ENCODE measurements at regions of chr21 and their contacts with region 1.

Region 1: DNA sequence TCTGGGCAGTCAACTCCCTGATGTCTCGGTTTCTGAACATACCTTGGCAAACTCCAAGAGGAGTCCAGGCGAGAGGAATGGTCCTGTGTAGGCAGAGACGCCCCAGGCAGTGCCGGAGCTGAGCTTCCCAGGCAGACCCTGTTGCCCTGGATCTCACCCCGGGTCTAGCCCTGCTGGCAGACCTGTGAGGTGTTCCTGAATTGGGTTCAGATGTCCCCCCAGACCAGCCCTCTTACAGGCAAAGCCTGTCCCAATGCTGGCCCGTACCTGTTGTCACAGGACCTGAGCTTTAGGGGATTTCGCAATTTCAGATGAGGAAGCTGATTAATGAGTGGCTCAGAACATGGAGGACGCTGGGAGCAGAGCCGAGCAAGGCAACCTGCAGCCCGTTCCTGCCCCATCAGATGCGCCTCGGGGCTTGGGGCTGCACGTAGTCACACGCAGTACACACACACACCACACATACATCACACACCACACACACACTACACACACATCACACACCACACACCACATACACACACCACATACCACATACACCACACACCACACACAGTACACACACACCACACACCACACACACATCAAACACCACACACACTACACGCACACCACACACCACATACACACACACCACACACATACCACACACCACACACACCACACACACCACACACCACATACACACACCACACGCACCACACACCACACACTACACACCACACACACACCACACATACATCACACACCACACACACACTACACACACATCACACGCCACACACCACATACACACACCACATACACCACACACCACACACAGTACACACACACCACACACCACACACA is 38.4 kb upstream of the PDE9A start:
- DNase-seq: peak; percentile 84
- H3K4me3 Mint-ChIP-seq: no peak overlapping the region
- H3K27ac Mint-ChIP-seq: no peak overlapping the region
- H3K4me1 Mint-ChIP-seq: peaks cover 6% of the 10 kb centered on the region
- H3K27me3 Mint-ChIP-seq: no peaks in the 10 kb centered on the region

Region 2: DNA sequence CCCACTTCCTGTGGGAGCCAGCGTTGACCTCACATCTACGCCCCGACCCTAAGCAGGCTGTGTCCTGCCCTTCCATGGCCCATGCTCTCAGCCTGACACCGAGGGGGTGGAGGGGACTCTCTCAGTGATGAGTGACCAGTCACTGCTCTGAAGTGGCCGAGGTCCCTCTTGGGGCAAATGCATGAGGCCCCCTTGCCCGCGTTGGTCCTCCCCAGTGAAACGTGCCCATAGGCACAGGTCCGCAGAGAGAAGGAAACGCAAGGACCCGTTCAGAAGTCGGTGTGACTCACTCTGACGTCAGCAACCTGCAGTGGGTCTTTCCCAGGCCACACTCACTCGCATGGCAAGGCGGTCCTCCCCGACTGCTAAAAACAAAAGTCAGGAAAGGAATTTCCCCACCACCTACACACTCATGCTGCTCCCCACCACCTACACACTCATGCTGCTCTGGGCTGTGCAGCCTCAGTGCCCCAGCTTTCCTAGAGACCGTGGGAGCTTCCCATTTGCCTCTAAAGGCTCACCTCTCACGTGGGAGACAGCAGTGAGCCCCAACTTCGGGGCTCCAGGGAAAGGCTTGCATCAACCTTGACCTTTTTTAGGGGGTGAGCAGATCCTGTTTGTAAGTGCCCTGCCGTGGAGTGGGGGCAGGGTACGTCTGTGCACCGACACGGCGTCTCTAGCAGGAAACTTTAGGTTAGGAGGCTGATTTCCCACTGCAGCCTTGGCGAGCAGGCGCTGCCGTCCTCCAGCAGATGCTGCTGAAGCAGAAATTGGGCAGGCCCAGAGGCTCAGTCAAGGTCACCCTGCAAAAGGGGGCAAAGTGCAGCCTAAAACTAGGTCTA is 199.9 kb before region 1 on chr21:
- CTCF ChIA-PET with region 1: no interaction called
- intact Hi-C with region 1: loop called (anchors 2 kb)
- DNase-seq: peak; percentile 99
- H3K4me3 Mint-ChIP-seq: peak overlapping the region; percentile 64
- H3K27ac Mint-ChIP-seq: peak overlapping the region; percentile 94
- H3K4me1 Mint-ChIP-seq: peaks cover 64% of the 10 kb centered on the region
- H3K27me3 Mint-ChIP-seq: no peaks in the 10 kb centered on the region

Region 3: GRCh38 chr21:42513985-42514882 is 100.8 kb before region 1 on chr21:
- CTCF ChIA-PET with region 1: no interaction called
- intact Hi-C with region 1: loop called (anchors 5 kb)
- DNase-seq: peak; percentile 72
- H3K4me3 Mint-ChIP-seq: peak overlapping the region; percentile 87
- H3K27ac Mint-ChIP-seq: peak overlapping the region; percentile 84
- H3K4me1 Mint-ChIP-seq: peaks cover 31% of the 10 kb centered on the region
- H3K27me3 Mint-ChIP-seq: no peaks in the 10 kb centered on the region

Region 4: GRCh38 chr21:42652527-42653230 is 37.6 kb after region 1 on chr21:
- CTCF ChIA-PET with region 1: no interaction called
- intact Hi-C with region 1: loop called (anchors 2 kb)
- DNase-seq: no peak
- H3K4me3 Mint-ChIP-seq: peak overlapping the region; percentile 70
- H3K27ac Mint-ChIP-seq: no peak overlapping the region
- H3K4me1 Mint-ChIP-seq: peaks cover 20% of the 10 kb centered on the region
- H3K27me3 Mint-ChIP-seq: no peaks in the 10 kb centered on the region

Region 5: DNA sequence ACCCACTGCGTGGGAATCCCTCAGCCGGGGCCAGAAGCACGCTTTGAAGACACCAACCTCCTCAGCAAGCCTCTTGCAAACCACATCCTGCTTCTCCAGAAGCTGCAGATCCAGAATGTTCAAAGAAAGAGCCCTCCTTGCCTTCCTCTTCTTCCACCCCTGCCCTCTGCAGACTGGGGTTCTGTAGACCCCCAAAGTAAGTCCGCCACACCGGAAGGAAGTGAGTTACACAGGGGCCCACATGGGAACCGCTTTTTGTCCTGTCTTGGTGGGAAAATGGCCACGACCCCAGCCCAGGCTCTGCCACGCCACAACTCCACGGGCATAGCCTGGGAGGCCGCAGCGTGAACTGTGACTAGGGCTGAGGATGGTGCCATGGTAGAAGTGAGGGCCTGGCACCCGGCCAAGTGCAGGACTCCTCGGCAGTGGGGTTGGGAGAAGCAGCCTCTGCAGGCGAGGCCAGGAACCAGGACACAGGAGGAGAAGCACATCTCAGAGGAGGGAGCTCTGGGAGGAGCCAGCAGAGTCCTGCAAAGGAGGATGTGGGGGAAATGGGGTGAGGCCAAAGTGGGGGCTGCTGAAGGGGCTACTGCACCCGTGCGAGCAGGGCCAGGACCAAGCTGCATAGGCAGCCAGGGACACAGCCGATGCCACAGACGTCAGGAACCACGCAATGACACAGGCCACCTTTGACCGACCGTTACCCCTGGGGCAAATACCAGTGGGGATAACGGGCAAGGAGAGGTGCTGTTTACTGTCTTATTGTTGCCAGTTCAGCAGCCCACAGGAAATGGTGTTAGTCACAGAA is 69.3 kb after region 1 on chr21:
- CTCF ChIA-PET with region 1: no interaction called
- intact Hi-C with region 1: loop called (anchors 5 kb)
- DNase-seq: peak; percentile 74
- H3K4me3 Mint-ChIP-seq: peak overlapping the region; percentile 65
- H3K27ac Mint-ChIP-seq: peak overlapping the region; percentile 81
- H3K4me1 Mint-ChIP-seq: peaks cover 46% of the 10 kb centered on the region
- H3K27me3 Mint-ChIP-seq: no peaks in the 10 kb centered on the region

Region 6: GRCh38 chr21:43362321-43362791 is 747.3 kb after region 1 on chr21:
- CTCF ChIA-PET with region 1: no interaction called
- intact Hi-C with region 1: no loop called
- DNase-seq: peak; percentile 81
- H3K4me3 Mint-ChIP-seq: peak overlapping the region; percentile 68
- H3K27ac Mint-ChIP-seq: peak overlapping the region; percentile 27
- H3K4me1 Mint-ChIP-seq: peaks cover 26% of the 10 kb centered on the region
- H3K27me3 Mint-ChIP-seq: no peaks in the 10 kb centered on the region